Panc1 (cell line): ENCODE measurements at regions of chr10 and their contacts with region 1.

Region 1: GRCh38 chr10:4678023-4678950 is 147.7 kb upstream of the AKR1E2 start:
- DNase-seq: peak; percentile 87
- ATAC-seq: peak; percentile 98
- H3K4me3 ChIP-seq: no peak overlapping the region
- H3K27ac ChIP-seq: peak overlapping the region; percentile 100
- H3K4me1 ChIP-seq: peaks cover 8% of the 10 kb centered on the region
- H3K27me3 ChIP-seq: no peaks in the 10 kb centered on the region
- CTCF ChIP-seq: no peak

Region 2: DNA sequence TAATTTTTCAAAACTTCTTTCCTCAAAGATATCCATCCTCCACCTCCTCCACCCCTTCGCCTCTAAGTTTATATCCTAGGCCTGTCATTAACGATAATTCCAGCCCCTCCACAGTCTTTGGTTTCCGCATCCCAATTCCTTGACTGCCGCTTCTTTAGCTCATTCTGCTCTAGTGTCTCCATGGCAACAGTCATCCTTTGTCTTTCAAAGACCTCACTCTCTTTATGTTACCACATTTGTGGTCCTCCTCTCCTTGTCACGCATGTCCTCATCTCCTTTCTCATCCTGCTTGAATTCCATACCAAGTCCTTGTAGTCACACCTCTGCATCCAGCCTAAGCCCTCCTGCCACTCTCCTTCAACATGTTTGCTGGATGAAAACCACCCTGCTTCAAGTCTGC is 382.1 kb before region 1 on chr10:
- CTCF ChIA-PET with region 1: no interaction called
- POLR2A ChIA-PET with region 1: interaction called, 11 read pairs
- in situ Hi-C with region 1: no loop called
- intact Hi-C with region 1: no loop called
- DNase-seq: no peak
- ATAC-seq: no peak
- H3K4me3 ChIP-seq: no peak overlapping the region
- H3K27ac ChIP-seq: peak overlapping the region; percentile 12; the same call in 1 of the 2 replicates
- H3K4me1 ChIP-seq: no peaks in the 10 kb centered on the region
- H3K27me3 ChIP-seq: no peaks in the 10 kb centered on the region
- CTCF ChIP-seq: no peak

Region 3: DNA sequence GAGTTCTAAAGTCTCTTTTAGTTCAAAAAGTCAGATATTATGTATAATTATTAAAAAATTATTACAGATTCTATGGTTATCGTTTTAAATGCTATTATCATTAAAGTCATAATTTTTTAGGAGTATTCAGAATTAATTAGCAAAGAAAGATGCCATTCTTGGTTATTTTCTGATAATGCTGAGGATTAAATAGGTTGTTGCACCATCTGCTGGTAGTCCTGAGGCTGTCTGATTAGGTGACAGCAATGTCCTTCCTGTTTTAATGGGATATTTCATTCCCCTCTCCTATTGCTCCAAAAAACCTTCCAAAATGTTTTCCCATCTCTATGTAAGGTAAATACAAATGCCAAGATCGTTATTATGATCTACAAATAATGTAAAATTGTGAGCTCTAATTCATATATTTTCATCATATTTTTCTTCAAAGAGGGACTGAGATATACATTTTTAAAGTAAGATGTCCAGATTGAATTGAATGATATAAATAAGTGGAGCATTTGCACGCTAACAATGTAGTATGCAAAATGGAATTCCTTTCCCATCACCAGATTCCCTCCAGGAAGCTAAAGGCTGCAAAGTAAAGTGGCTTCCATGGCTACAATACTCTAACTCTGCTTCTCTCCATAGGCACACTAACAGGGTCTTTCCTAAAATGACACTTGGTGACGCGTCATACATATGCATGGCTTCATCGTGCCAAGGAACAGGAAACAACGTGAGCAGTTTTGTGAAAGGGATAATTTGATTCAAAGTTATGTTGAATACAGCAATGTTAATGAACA is 88.9 kb after region 1 on chr10:
- CTCF ChIA-PET with region 1: no interaction called
- POLR2A ChIA-PET with region 1: no interaction called
- in situ Hi-C with region 1: no loop called
- intact Hi-C with region 1: loop called (anchors 5 kb)
- DNase-seq: peak; percentile 36
- ATAC-seq: peak; percentile 60; the same call in 1 of the 2 replicates
- H3K4me3 ChIP-seq: no peak overlapping the region
- H3K27ac ChIP-seq: peak overlapping the region; percentile 90
- H3K4me1 ChIP-seq: peaks cover 22% of the 10 kb centered on the region
- H3K27me3 ChIP-seq: no peaks in the 10 kb centered on the region
- CTCF ChIP-seq: peak; percentile 57; the same call in 1 of the 2 replicates